HEK293 (cell line): ENCODE measurements at regions of chr19 and their contacts with region 1.

Region 1: DNA sequence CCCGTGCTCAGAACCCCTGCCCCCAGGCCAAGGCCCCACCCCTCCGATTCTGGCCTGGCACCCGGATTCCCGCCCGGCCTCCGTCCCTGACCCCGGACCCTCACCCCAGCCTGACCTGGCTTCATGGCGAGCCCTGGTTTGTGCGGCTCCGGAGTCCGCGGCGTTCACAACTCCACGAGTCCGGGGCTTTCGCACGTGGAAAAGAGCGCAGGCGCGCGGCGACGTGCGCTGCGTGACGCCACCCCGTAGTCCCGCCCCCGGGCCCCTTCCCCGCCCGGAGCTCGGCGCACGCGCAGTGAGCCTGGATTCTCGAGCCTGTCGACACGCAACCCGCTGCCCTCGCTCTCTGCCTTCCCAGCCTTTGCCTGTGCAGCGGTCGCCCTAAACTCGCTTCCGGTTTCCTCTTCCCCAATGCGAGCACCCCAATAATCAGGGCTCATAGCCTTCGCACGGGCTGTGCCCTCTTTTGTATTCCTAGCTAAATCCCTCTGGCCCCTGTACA is at the start of gene FBL:
- H3K4me3 ChIP-seq: peak within 1 kb of the TSS; percentile 62
- H3K27ac ChIP-seq: peak within 1 kb of the TSS; percentile 79
- H3K4me1 ChIP-seq: peaks cover 49% of the 10 kb centered on the region
- CTCF ChIP-seq: no peak

Region 2: DNA sequence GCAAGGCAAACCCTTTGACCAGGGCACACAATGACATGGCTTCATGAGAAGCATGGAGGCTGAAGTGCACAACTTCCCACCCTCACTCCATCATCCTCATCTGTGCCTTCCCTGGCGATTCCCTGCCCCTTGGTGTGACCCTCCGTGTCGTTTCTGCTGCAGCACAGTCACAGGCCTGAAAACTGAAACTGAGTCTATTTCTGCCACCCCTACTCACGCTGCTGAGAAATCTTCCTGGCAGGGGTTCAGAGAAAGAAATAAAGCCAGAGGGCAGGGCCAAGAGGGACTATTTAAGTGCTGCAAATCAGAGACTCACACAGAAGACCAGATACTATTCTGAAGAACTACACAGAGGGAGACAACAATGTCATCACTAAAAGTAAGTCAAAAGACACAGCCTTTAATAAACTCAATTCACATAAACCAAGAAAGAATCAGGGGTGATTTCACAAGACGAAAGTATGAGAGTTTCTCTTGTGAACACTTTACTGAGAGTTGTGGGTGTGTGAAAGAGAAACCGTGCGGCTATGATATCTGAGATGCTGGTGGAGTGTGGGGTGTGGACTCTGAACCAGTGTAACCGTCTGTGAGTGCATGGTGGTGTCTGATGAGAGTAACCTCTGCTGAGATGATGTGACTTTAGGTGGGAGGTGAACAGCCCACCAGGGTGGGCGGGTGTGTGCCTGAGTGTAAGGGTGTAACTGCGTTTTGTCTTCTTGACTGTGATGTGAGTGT is 167.0 kb before region 1 on chr19:
- CTCF ChIA-PET with region 1: interaction called, 34 read pairs
- POLR2A ChIA-PET with region 1: no interaction called
- H3K4me3 ChIP-seq: no peak overlapping the region
- H3K27ac ChIP-seq: no peak overlapping the region
- H3K4me1 ChIP-seq: peaks cover 5% of the 10 kb centered on the region; the same call in 1 of the 2 replicates
- CTCF ChIP-seq: no peak

Region 3: GRCh38 chr19:39792999-39793546 is 53.2 kb before region 1 on chr19:
- CTCF ChIA-PET with region 1: interaction called, 237 read pairs
- POLR2A ChIA-PET with region 1: interaction called, 14 read pairs
- H3K4me3 ChIP-seq: peak overlapping the region; percentile 29
- H3K27ac ChIP-seq: no peak overlapping the region
- H3K4me1 ChIP-seq: no peaks in the 10 kb centered on the region
- CTCF ChIP-seq: peak; percentile 99

Region 4: GRCh38 chr19:39824143-39825092 is 21.8 kb before region 1 on chr19:
- CTCF ChIA-PET with region 1: interaction called, 102 read pairs
- POLR2A ChIA-PET with region 1: interaction called, 8 read pairs
- H3K4me3 ChIP-seq: peak overlapping the region; percentile 59
- H3K27ac ChIP-seq: peak overlapping the region; percentile 75
- H3K4me1 ChIP-seq: peaks cover 12% of the 10 kb centered on the region
- CTCF ChIP-seq: no peak

Region 5: DNA sequence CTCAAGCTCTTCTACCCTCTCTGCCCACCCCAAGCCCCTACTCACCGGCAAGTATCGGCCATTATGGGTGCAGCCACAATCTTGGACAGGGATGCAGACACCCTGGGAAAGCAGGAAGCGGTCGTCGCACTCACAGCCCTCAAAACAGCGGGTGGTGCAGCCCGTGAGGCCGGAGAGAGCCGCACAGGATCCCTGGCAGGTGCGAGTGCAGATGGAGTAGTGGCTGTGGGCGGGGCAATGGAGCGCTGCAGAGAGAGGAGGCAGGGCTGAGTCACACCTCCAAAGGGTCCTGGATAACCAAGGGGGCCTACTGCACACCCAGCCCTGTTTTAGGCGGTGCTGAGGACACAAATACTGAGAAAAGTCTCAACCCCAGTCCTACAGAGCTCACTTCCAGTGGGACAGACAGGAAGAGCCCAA is 24.0 kb after region 1 on chr19:
- CTCF ChIA-PET with region 1: interaction called, 13 read pairs
- POLR2A ChIA-PET with region 1: interaction called, 3 read pairs
- H3K4me3 ChIP-seq: no peak overlapping the region
- H3K27ac ChIP-seq: no peak overlapping the region
- H3K4me1 ChIP-seq: peaks cover 6% of the 10 kb centered on the region
- CTCF ChIP-seq: no peak